Thyroid gland (tissue), 4 donors: ENCODE measurements at regions of chr2 and their contacts with region 1.

Region 1: GRCh38 chr2:72770879-72771461 is 54.9 kb downstream of the EXOC6B start:
- DNase-seq: peak; percentile 39 to 43
- H3K4me3 ChIP-seq: no peak overlapping the region
- H3K27ac ChIP-seq: no peak overlapping the region
- H3K4me1 ChIP-seq: no peaks in the 10 kb centered on the region
- H3K27me3 ChIP-seq: no peaks in the 10 kb centered on the region
- CTCF ChIP-seq: peak; percentile 22 to 90 (median 77)
- POLR2A ChIP-seq: no peak

Region 2: GRCh38 chr2:72846538-72847095 is 75.6 kb after region 1 on chr2:
- intact Hi-C with region 1: no loop called
- DNase-seq: no peak
- H3K4me3 ChIP-seq: no peak overlapping the region
- H3K27ac ChIP-seq: no peak overlapping the region
- H3K4me1 ChIP-seq: no peaks in the 10 kb centered on the region
- H3K27me3 ChIP-seq: no peaks in the 10 kb centered on the region
- CTCF ChIP-seq: no peak
- POLR2A ChIP-seq: no peak

Region 3: DNA sequence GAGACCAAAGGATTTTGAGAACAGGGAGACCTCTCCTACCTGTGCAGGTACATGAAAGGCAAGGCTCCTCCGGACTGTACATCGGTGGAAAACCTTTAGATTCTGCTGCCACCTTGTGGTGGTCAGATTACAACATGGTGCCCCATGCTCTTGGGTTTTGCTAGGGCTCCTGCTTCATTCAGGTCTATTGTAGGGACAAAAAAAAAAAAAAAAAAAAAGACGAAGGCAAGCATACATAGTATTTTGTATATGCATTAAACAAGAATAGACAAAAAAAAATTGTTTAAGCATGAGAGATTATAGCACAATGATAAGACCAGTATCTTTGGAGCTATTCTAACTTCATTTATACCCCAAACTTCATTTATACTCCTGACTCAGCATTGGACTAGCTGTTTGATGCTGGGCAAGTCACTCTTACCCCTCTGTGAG is 88.9 kb after region 1 on chr2:
- intact Hi-C with region 1: loop called (anchors 5 kb)
- DNase-seq: peak; percentile 72
- H3K4me3 ChIP-seq: no peak overlapping the region
- H3K27ac ChIP-seq: no peak overlapping the region
- H3K4me1 ChIP-seq: peaks cover 0 to 5% of the 10 kb centered on the region in 2 donors
- H3K27me3 ChIP-seq: no peaks in the 10 kb centered on the region
- CTCF ChIP-seq: peak; percentile 45 to 76 (median 54)
- POLR2A ChIP-seq: no peak

Region 4: DNA sequence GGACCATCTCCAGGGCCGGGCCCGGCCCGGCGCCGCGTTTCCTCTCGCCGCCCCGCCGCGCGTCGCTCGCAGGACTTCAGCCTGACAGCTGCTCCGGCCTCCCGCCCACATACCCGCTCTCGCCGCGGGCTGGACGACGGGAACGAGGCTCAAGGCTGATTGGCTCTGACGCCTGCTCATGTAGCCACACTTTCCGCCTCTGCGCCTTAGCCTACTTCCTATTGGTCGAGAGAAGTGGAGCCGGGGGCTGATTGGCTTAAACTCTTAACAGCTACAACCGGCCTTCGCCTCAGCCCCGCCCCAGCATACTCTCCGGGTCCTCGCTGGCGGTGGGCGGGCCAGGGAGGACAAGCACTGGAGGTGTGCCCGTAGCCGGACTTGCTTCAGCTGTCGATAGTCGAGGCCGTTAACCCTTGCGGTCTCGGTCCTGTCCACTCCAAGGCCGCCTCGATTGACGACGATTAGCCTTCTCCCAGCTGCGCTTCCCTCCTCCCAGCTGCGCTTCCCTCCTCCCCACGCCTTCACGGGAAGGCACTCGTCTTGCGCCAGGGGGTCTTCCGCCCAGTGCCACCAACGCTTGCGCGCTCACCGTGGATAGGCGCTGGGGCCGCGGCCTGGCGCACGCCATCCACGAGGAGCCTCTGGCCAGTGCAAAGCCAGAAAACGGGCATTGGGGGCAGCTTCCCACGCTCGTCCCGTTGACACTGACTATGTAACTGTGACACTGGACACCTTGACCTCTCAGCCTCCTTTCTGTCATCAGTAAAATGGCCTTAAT is 462.4 kb after region 1 on chr2 and contains the start of gene PRADC1:
- intact Hi-C with region 1: no loop called
- DNase-seq: peak; percentile 100
- H3K4me3 ChIP-seq: peak within 1 kb of the TSS; percentile 69 to 91 (median 75)
- H3K27ac ChIP-seq: peak within 1 kb of the TSS; percentile 83 to 99 (median 89)
- H3K4me1 ChIP-seq: peaks cover 12 to 13% of the 10 kb centered on the region in 2 donors
- H3K27me3 ChIP-seq: no peaks in the 10 kb centered on the region
- CTCF ChIP-seq: no peak
- POLR2A ChIP-seq: peak in 1 of 2 donors; percentile 79
- total RNA-seq, gene PRADC1: 14.3 to 65.2 (median 33.2) TPM